H1 (cell line): ENCODE measurements at regions of chr3 and their contacts with region 1.

Region 1: GRCh38 chr3:185724761-185725160 is 100.1 kb downstream of the IGF2BP2 start:
- DNase-seq: no peak
- H3K4me3 ChIP-seq: no peak overlapping the region
- H3K27ac ChIP-seq: no peak overlapping the region
- H3K4me1 ChIP-seq: peaks cover 2 to 39% (median 31%) of the 10 kb centered on the region in 4 experiments; a peak in 6 of 7 replicates
- H3K27me3 ChIP-seq: no peaks in the 10 kb centered on the region
- CTCF ChIP-seq: no peak
- EP300 ChIP-seq: no peak
- POLR2A ChIP-seq: no peak
- RAD21 ChIP-seq: no peak

Region 2: DNA sequence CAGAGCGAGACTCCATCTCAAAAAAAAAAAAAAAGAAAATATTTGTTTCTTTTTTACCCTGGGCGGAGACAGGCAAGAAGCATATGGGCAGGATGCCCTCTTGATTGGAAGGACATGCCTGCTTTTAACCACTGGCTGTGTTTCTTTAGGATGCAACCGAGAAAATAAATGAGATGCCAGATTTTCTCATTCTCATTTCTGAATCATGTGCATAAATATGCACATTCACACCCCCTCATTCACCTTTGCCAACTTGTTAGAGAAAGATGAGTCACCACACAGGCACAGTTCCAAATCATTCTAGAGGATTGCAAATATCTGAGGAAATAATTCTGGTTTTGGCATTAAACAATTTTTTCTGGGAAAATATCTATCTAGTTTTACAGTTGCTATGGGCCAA is 175.7 kb before region 1 on chr3:
- CTCF ChIA-PET with region 1: no interaction called
- POLR2A ChIA-PET with region 1: no interaction called
- DNase-seq: no peak
- H3K4me3 ChIP-seq: no peak overlapping the region
- H3K27ac ChIP-seq: no peak overlapping the region
- H3K4me1 ChIP-seq: peaks cover 0 to 3% (median 0%) of the 10 kb centered on the region in 4 experiments; a peak in 1 of 7 replicates
- H3K27me3 ChIP-seq: no peaks in the 10 kb centered on the region
- CTCF ChIP-seq: no peak
- EP300 ChIP-seq: no peak
- POLR2A ChIP-seq: no peak
- RAD21 ChIP-seq: no peak

Region 3: GRCh38 chr3:185645596-185646381 is 79.0 kb before region 1 on chr3:
- CTCF ChIA-PET with region 1: no interaction called
- POLR2A ChIA-PET with region 1: no interaction called
- DNase-seq: no peak
- H3K4me3 ChIP-seq: no peak overlapping the region
- H3K27ac ChIP-seq: no peak overlapping the region; the same call in 1 of the 2 replicates
- H3K4me1 ChIP-seq: peaks cover 5 to 20% (median 12%) of the 10 kb centered on the region in 4 experiments
- H3K27me3 ChIP-seq: no peaks in the 10 kb centered on the region
- CTCF ChIP-seq: no peak
- EP300 ChIP-seq: no peak
- POLR2A ChIP-seq: no peak
- RAD21 ChIP-seq: no peak

Region 4: GRCh38 chr3:185711255-185711870 is 13.4 kb before region 1 on chr3:
- CTCF ChIA-PET with region 1: interaction called, 15 read pairs
- POLR2A ChIA-PET with region 1: interaction called, 5 read pairs
- DNase-seq: peak in 1 of 2 experiments; percentile 50
- H3K4me3 ChIP-seq: no peak overlapping the region
- H3K27ac ChIP-seq: no peak overlapping the region
- H3K4me1 ChIP-seq: peaks cover 8 to 29% (median 22%) of the 10 kb centered on the region in 4 experiments
- H3K27me3 ChIP-seq: no peaks in the 10 kb centered on the region
- CTCF ChIP-seq: no peak
- EP300 ChIP-seq: no peak
- POLR2A ChIP-seq: no peak
- RAD21 ChIP-seq: no peak; a peak in 1 of 4 replicates

Region 5: GRCh38 chr3:185741586-185741985 is 16.8 kb after region 1 on chr3:
- CTCF ChIA-PET with region 1: no interaction called
- POLR2A ChIA-PET with region 1: no interaction called
- DNase-seq: no peak
- H3K4me3 ChIP-seq: no peak overlapping the region
- H3K27ac ChIP-seq: no peak overlapping the region
- H3K4me1 ChIP-seq: peaks cover 2 to 15% (median 3%) of the 10 kb centered on the region in 4 experiments; a peak in 4 of 7 replicates
- H3K27me3 ChIP-seq: no peaks in the 10 kb centered on the region
- CTCF ChIP-seq: no peak
- EP300 ChIP-seq: no peak
- POLR2A ChIP-seq: no peak
- RAD21 ChIP-seq: no peak